Psoas muscle (tissue), 8 donors: ENCODE measurements at regions of chr3 and their contacts with region 1.

Region 1: DNA sequence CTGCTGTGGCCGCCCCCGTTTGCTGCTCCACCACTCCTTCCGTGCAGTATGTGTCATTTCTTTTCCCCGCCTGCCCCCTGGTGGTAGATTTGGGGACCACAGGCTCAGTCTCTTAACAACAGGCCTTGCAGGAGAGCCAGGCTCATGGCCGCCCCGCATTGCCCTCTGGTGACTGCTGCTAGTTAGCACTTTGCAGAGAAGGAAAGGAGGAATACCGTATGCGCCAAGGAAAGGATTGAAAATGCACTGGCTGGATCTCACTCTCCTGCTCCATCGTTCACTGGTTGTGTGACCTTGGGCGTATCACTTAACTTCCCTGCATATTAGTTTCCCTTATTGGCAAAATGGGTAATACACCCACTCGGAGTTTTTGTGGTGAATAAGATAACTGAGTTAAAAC is 39.3 kb upstream of the PXYLP1 start:
- DNase-seq: peak; percentile 97 to 98
- ATAC-seq: peak; percentile 99 to 100 (median 100)
- H3K4me3 ChIP-seq: no peak overlapping the region
- H3K27ac ChIP-seq: no peak overlapping the region
- H3K4me1 ChIP-seq: no peaks in the 10 kb centered on the region
- H3K27me3 ChIP-seq: no peaks in the 10 kb centered on the region
- CTCF ChIP-seq: peak; percentile 99

Region 2: GRCh38 chr3:140898340-140899180 is 293.8 kb before region 1 on chr3:
- intact Hi-C with region 1: loop called (anchors 2 to 10 kb)
- DNase-seq: no peak
- ATAC-seq: peak in 3 of 4 donors; percentile 76 to 91 (median 81)
- H3K4me3 ChIP-seq: no peak overlapping the region
- H3K27ac ChIP-seq: no peak overlapping the region
- H3K4me1 ChIP-seq: peaks cover 3% of the 10 kb centered on the region
- H3K27me3 ChIP-seq: no peaks in the 10 kb centered on the region
- CTCF ChIP-seq: peak; percentile 57

Region 3: DNA sequence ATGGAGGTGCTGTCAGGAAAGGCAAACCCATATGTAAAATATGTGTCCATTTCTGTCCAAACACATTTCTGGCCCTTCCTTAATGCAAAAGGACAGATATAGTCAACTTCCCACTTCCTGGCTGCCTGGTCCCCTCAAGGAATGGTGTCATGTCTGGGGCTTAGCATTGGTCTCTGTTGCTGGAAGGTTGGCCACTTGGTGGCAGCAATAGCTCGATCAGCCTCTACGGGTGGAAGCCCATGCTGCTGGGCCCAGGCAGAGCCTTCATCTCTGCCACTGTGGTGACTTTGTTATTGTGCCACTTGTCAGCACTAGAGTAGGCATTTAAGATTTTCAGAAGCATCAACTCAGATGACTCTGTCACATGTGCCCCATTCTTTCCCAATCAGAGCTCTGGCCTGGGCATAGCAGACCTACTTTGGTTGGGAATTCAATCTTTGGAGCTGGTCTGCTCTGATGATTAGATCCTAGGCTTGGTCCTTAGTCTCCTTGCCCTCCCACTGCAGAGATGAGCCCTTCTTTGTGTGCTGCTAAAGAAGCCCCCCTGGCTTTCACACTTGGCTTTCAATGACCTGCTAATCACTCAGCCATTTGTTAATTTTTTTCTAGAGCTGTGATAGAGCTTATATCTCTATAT is 192.2 kb before region 1 on chr3:
- intact Hi-C with region 1: loop called (anchors 1 to 2 kb)
- DNase-seq: peak; percentile 63 to 75
- ATAC-seq: peak; percentile 86 to 97 (median 94)
- H3K4me3 ChIP-seq: no peak overlapping the region
- H3K27ac ChIP-seq: no peak overlapping the region
- H3K4me1 ChIP-seq: no peaks in the 10 kb centered on the region
- H3K27me3 ChIP-seq: no peaks in the 10 kb centered on the region
- CTCF ChIP-seq: peak; percentile 80

Region 4: GRCh38 chr3:141011232-141011996 is 180.9 kb before region 1 on chr3:
- intact Hi-C with region 1: loop called in 1 of 2 experiments (anchors 1 kb)
- DNase-seq: peak; percentile 82 to 90
- ATAC-seq: peak; percentile 77 to 89 (median 87)
- H3K4me3 ChIP-seq: no peak overlapping the region
- H3K27ac ChIP-seq: no peak overlapping the region
- H3K4me1 ChIP-seq: peaks cover 6% of the 10 kb centered on the region
- H3K27me3 ChIP-seq: no peaks in the 10 kb centered on the region
- CTCF ChIP-seq: peak; percentile 73

Region 5: GRCh38 chr3:141050576-141051442 is 141.5 kb before region 1 on chr3 and contains the start of gene SPSB4:
- intact Hi-C with region 1: loop called in 1 of 2 experiments (anchors 5 kb)
- DNase-seq: peak; percentile 81 to 93
- ATAC-seq: peak; percentile 94 to 98 (median 96)
- H3K4me3 ChIP-seq: peak within 1 kb of the TSS; percentile 66
- H3K27ac ChIP-seq: peak within 1 kb of the TSS; percentile 68
- H3K4me1 ChIP-seq: peaks cover 8% of the 10 kb centered on the region
- H3K27me3 ChIP-seq: peaks cover 0 to 12% (median 0%) of the 10 kb centered on the region in 3 donors
- CTCF ChIP-seq: peak; percentile 63
- total RNA-seq, gene SPSB4: 0.40 to 1.9 (median 0.59) TPM

Region 6: DNA sequence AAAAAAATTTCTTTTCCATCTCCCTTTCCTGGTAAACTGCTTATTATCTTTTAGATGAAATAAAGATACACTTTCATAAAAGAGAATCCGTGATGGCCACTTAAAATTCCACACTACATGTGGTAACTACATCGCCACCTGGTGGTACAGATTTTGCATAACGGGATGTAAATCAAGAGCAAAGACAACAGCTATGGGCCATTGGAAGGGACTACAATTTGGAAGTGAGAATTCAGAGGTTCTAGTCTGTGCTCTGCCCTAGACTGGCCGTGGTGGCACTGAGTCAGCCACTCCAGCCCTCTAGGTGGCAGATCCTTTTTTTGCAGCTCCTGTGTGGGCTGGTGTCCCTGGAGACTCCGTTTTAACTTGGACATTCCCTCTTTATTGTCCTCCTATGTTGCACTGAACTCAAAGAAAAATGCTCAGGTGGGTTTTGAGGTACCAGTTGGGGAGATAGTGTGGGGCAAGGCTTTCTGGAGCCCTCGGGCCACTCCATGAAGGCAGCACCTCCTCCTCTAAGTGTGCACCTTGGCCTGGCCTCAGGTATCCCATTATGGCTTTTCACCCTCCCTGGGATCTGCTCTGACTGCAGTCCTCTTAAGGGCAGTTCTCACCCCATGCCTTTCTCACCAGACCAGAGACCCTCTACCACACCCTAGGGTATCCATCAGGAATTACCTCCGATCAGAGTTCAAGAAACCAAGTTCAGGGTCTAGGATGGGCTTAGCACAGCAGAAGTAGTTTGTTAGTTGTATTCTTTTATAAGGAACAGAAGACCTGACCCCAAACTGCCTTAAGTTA is 86.3 kb before region 1 on chr3:
- intact Hi-C with region 1: loop called (anchors 2 to 5 kb)
- DNase-seq: peak; percentile 28 to 29
- ATAC-seq: peak; percentile 26 to 63 (median 38)
- H3K4me3 ChIP-seq: no peak overlapping the region
- H3K27ac ChIP-seq: no peak overlapping the region
- H3K4me1 ChIP-seq: peaks cover 21% of the 10 kb centered on the region
- H3K27me3 ChIP-seq: no peaks in the 10 kb centered on the region
- CTCF ChIP-seq: peak; percentile 90

Region 7: GRCh38 chr3:141392897-141393734 is 200.8 kb after region 1 on chr3:
- intact Hi-C with region 1: no loop called
- DNase-seq: no peak
- ATAC-seq: no peak
- H3K4me3 ChIP-seq: no peak overlapping the region
- H3K27ac ChIP-seq: no peak overlapping the region
- H3K4me1 ChIP-seq: no peaks in the 10 kb centered on the region
- H3K27me3 ChIP-seq: no peaks in the 10 kb centered on the region
- CTCF ChIP-seq: no peak